ENCODE measurements at regions of chrX and their contacts with region 1.

Region 1: GRCh38 chrX:72306851-72307645 is 1.3 kb upstream of the CITED1 start:
- DNase-seq: peak; percentile 79
- H3K4me3 ChIP-seq: peak overlapping the region; percentile 31 to 58 (median 51)
- H3K27ac ChIP-seq: peak overlapping the region in 3 of 4 donors; percentile 14 to 58 (median 54)
- H3K4me1 ChIP-seq: peaks cover 0 to 52% (median 33%) of the 10 kb centered on the region in 4 donors
- H3K27me3 ChIP-seq: peaks cover 0 to 56% (median 31%) of the 10 kb centered on the region in 3 donors
- CTCF ChIP-seq: no peak
- EP300 ChIP-seq: no peak
- POLR2A ChIP-seq: no peak

Region 2: DNA sequence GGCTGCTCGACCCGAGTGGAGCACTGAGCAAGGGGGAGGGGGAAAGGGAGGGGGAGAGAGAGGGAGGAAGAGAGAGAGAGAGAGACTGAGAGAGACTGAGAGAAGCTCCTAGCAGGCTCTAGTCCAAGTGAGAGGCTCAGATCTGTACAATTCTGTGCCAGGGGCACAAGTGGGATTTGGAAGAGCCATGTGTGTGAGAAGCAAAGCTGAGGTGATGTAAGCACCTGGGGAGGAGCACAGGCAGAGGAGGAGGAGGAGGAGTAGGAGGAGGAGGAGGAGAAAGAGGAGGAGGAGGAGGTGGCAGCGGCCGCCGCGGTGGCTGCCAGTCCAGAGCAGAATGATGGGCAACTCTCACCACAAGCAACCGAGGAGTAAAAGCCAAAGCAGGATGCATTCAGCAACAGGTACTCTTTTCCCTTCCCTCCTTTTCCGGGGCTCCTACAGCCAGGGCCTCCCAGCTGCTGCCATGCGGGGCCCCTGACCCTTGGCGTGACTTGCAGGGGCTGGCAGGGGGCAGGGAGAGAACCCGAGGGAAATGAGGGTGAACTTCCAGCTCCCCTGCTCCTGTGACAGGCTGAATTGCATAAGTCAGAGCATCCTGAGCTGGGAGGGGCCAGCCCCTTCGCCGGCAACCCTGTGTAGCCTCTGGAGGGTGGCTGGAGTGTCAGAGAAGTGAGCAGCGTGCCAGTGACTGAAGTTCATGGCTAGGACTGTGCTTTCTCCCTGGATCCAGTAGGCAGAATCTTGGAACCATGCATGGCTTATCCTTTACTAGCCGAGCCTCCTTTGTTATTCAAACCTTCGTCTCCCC is 237.5 kb before region 1 on chrX:
- intact Hi-C with region 1: no loop called
- DNase-seq: peak; percentile 74
- H3K4me3 ChIP-seq: peak overlapping the region in 3 of 4 donors; percentile 29 to 32 (median 29)
- H3K27ac ChIP-seq: peak overlapping the region; percentile 42 to 79 (median 70)
- H3K4me1 ChIP-seq: peaks cover 0 to 38% (median 17%) of the 10 kb centered on the region in 4 donors
- H3K27me3 ChIP-seq: no peaks in the 10 kb centered on the region
- CTCF ChIP-seq: no peak
- EP300 ChIP-seq: no peak
- POLR2A ChIP-seq: no peak

Region 3: GRCh38 chrX:72276478-72276953 is 30.5 kb before region 1 on chrX:
- intact Hi-C with region 1: loop called (anchors 1 kb)
- DNase-seq: no peak
- H3K4me3 ChIP-seq: peak overlapping the region; percentile 44 to 79 (median 64)
- H3K27ac ChIP-seq: peak overlapping the region; percentile 71 to 88 (median 86)
- H3K4me1 ChIP-seq: peaks cover 0 to 26% (median 14%) of the 10 kb centered on the region in 4 donors
- H3K27me3 ChIP-seq: no peaks in the 10 kb centered on the region
- CTCF ChIP-seq: no peak
- EP300 ChIP-seq: no peak
- POLR2A ChIP-seq: no peak

Region 4: DNA sequence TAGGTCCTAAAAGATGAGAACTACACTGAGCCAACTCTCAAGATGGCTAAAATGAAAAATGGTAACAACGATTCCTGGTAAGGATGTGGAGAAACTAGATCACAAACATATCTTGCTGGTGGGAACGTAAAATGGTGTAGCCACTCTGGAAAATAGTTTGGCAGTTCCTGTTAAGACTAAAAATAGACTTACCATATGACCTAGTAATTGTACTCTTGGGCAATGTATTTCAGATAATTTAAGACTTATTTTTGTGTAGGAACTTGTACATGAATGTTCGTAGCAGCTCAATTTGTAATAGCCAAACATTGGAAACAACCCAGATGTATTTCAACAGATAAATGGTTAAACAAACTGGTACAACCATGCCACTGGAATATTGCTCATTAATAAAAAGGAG is 159.4 kb after region 1 on chrX:
- intact Hi-C with region 1: no loop called
- DNase-seq: no peak
- H3K4me3 ChIP-seq: no peak overlapping the region
- H3K27ac ChIP-seq: no peak overlapping the region
- H3K4me1 ChIP-seq: no peaks in the 10 kb centered on the region
- H3K27me3 ChIP-seq: no peaks in the 10 kb centered on the region
- CTCF ChIP-seq: no peak
- EP300 ChIP-seq: no peak
- POLR2A ChIP-seq: no peak

Region 5: DNA sequence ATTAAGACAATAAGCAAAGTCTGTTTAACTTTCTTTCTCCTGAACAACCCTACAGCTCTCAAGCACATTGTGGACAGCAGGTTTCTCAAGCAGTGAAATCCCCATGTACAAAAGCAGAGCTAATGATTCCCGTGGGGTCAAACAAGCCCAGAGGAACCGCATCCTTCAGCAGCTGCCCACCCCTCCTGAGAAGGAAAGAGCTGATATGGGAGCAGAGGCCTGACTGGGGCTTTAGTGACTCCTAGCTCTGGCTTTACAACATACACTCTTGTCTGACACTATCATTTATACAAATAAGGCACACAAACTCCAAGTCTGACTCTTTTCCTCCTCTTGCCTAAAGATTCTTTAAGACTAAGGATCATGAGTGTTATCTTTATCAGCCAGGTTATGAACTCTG is 232.8 kb after region 1 on chrX:
- intact Hi-C with region 1: loop called (anchors 10 kb)
- DNase-seq: no peak
- H3K4me3 ChIP-seq: no peak overlapping the region
- H3K27ac ChIP-seq: no peak overlapping the region
- H3K4me1 ChIP-seq: peaks cover 0 to 15% (median 6%) of the 10 kb centered on the region in 4 donors
- H3K27me3 ChIP-seq: no peaks in the 10 kb centered on the region
- CTCF ChIP-seq: no peak
- EP300 ChIP-seq: no peak
- POLR2A ChIP-seq: no peak

Measured in sigmoid colon (tissue), 7 donors.